A673 (cell line): ENCODE measurements at regions of chrX and their contacts with region 1.

Region 1: DNA sequence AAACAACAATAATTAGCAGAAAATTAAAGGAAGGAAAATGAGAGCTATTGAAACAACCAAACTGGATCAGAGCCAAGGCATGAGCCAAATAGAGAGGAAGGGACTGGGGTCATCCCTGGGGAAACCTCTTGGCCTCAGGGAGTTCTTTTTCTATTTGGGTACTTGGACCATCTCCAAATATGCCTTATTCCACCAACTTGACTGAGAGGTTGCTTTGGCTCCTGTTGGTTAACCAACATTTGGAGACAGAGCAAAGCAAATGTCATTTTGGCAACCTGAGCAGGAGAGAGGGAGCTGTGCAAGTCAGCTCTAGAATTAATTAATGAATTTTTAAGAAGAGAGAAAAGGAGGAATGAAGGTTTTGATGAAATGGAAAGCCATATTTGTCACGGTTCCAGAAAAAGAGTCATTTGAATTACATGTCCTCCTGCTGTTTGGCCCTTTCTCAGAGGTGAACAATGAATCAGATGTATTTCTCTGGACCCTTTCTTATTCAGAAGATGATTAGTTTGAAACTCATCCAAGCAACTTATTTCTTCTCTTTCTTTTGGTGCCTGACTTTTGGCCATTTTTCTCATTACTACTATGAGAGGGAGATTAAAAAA is 119.1 kb downstream of the CNKSR2 start:
- DNase-seq: no peak
- H3K4me3 ChIP-seq: no peak overlapping the region
- H3K27ac ChIP-seq: no peak overlapping the region
- H3K4me1 ChIP-seq: no peaks in the 10 kb centered on the region
- H3K27me3 ChIP-seq: no peaks in the 10 kb centered on the region
- CTCF ChIP-seq: no peak

Region 2: DNA sequence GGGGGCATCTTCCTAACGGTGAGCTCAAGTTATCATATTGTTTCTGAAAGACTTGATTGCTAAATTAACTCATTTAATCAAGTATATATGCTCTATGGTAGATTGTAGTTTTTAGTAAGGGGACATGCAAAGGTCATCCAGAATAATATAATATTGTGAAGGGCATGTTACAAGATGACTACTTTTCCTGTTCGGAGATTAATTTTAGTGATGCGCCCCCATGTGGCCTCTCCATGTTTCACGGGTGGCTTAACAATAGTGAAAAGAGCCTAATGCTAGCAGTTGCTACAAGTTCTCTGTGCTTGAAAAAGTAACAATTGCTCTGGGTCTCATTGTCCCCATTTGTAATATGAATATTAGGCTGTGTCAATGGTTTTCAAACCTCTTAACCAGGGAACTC is 252.4 kb after region 1 on chrX:
- CTCF ChIA-PET with region 1: no interaction called
- POLR2A ChIA-PET with region 1: no interaction called
- intact Hi-C with region 1: loop called (anchors 10 kb)
- DNase-seq: peak; percentile 52
- H3K4me3 ChIP-seq: no peak overlapping the region
- H3K27ac ChIP-seq: no peak overlapping the region
- H3K4me1 ChIP-seq: no peaks in the 10 kb centered on the region
- H3K27me3 ChIP-seq: peaks cover 14% of the 10 kb centered on the region
- CTCF ChIP-seq: peak; percentile 84